ENCODE measurements at regions of chr20 and their contacts with region 1.

Region 1: GRCh38 chr20:47150403-47151152 is 205.9 kb downstream of the ZMYND8 start:
- DNase-seq: peak; percentile 25
- H3K4me3 Mint-ChIP-seq: no peak overlapping the region
- H3K27ac Mint-ChIP-seq: no peak overlapping the region
- H3K4me1 Mint-ChIP-seq: no peaks in the 10 kb centered on the region
- H3K27me3 Mint-ChIP-seq: peaks cover 6% of the 10 kb centered on the region

Region 2: GRCh38 chr20:46757754-46758678 is 392.6 kb before region 1 on chr20:
- CTCF ChIA-PET with region 1: no interaction called
- intact Hi-C with region 1: loop called (anchors 1 kb)
- DNase-seq: peak; percentile 73
- H3K4me3 Mint-ChIP-seq: no peak overlapping the region
- H3K27ac Mint-ChIP-seq: no peak overlapping the region
- H3K4me1 Mint-ChIP-seq: no peaks in the 10 kb centered on the region
- H3K27me3 Mint-ChIP-seq: no peaks in the 10 kb centered on the region

Region 3: DNA sequence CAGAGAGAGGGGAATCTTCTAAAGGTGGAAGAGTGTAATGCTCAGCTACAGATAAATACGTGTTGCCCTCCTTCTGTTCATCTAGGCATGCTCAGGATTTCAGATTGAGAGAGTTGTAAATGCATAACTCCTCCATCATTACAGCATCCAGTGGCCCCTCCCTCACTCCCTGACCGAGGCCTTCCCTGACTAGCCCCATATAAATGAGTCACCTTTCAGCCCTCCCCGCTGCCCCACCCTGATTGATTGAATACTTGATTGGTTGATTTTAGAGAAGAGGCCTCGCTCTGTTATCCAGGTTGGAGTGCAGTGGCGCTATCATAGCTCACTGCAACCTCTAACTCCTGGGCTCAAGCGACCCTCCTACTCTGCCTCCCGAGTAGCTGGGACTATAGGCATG is 62.2 kb before region 1 on chr20:
- CTCF ChIA-PET with region 1: no interaction called
- intact Hi-C with region 1: no loop called
- DNase-seq: no peak
- H3K4me3 Mint-ChIP-seq: no peak overlapping the region
- H3K27ac Mint-ChIP-seq: no peak overlapping the region
- H3K4me1 Mint-ChIP-seq: no peaks in the 10 kb centered on the region
- H3K27me3 Mint-ChIP-seq: peaks cover 4% of the 10 kb centered on the region

Region 4: DNA sequence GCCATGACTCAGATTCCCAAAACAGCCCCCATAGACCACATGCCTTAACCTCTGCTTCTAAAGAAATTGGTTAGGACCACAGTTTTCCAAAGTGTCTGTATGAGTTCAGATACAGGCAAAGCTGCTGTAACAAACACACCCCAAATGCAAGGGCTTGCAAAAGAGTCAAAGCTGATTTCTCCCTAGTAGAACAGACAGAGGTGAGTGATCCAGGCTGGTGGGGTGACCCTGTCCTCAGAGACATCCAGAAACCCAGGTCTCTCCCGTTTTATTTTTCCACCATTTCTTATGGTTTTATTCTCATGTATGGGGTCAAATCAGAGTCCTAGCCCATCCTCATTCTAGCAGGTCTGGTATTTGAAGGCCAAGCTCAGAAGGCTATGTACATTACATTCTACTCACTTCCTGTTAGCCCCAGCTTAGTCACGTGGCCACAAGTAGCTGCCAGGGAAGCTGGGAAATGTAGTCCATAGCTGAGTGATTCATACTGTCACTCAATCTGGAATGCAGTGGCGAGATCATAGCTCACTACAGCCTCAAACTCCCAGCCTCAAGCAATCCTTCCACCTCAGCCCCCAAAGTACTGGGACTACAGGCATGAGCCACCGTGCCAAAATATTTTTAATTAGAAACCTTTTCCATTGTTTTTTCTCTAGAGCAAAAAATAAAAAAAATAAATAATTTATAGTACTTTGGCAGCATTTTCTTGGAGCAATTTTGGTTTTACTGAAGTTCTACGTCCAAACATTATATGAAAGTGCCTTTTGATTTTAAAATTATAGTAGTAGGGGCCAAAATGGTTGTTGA is 30.7 kb after region 1 on chr20:
- CTCF ChIA-PET with region 1: no interaction called
- intact Hi-C with region 1: no loop called
- DNase-seq: peak; percentile 24
- H3K4me3 Mint-ChIP-seq: no peak overlapping the region
- H3K27ac Mint-ChIP-seq: no peak overlapping the region
- H3K4me1 Mint-ChIP-seq: no peaks in the 10 kb centered on the region
- H3K27me3 Mint-ChIP-seq: no peaks in the 10 kb centered on the region